ENCODE measurements at regions of chr5 and their contacts with region 1.

Region 1: GRCh38 chr5:57736716-57737115 is 254.1 kb upstream of the ACTBL2 start:
- DNase-seq: no peak
- H3K4me3 ChIP-seq: no peak overlapping the region
- H3K27ac ChIP-seq: peak overlapping the region; percentile 92
- H3K4me1 ChIP-seq: peaks cover 49% of the 10 kb centered on the region
- H3K27me3 ChIP-seq: no peaks in the 10 kb centered on the region
- CTCF ChIP-seq: no peak

Region 2: DNA sequence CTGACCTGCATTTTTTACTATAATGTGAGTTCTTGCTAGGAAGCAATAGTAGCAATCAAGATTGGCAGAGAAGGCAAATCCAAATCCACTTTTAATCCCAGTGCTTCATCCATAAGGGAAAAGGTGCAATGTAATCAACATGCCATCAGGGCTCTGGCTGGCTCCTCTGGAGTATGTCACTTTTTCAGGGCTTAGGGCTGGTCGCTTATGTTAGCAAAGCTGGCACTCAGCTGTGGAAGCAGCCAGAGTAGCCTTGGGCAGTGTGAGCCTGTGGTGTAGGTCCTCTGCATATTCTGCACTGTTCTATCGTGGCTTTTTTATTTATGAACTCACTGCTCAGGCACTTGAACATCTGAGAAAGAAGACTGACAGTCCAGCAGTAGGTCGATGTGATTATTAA is 270.2 kb before region 1 on chr5:
- CTCF ChIA-PET with region 1: no interaction called
- POLR2A ChIA-PET with region 1: no interaction called
- intact Hi-C with region 1: no loop called
- DNase-seq: no peak
- H3K4me3 ChIP-seq: no peak overlapping the region
- H3K27ac ChIP-seq: no peak overlapping the region
- H3K4me1 ChIP-seq: peaks cover 13% of the 10 kb centered on the region; the same call in 1 of the 2 replicates
- H3K27me3 ChIP-seq: no peaks in the 10 kb centered on the region
- CTCF ChIP-seq: no peak

Region 3: DNA sequence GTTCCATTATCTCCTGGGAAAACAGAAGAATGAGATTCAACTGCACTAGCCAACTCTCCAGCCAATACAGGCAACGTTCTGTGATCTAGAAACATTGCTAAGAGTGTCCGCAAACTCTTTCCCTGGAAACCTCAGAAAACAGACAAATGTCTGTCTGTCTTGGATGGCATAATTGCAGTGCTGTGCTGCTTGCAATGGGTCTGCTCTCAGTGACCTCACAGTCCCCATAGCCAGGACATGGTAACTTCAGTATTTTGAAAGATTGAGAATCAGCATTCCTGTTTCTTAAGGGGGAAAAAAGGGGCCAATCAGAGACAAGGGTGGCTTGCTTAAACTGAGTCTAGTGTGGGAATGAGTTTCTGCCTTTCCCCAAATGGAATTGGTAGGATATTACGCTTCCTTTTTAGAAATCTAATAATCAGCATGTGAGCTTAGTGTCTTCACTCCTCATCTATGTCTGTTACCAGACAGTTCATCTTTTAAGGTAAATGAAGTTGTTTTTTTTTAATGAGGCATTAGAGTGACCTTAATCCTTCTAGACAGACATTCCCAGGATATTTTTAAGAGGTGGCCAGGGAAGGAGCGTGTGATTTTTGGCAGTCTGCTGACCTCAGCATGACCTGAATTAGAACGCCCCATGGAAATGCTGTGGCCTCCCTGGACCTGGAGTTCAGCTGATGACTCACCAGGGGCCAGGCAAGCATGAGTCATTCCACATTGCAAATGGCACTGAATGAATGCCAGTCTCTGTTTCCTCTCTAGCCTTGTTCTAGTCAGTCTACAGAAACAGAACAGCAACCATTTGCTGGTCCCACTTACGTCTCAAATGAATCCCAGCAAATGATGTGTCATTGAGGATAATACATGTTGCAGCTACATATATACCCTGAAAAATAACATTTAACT is 43.9 kb before region 1 on chr5:
- CTCF ChIA-PET with region 1: no interaction called
- POLR2A ChIA-PET with region 1: no interaction called
- intact Hi-C with region 1: loop called (anchors 1 kb)
- DNase-seq: peak; percentile 83 to 86
- H3K4me3 ChIP-seq: no peak overlapping the region; the same call in 1 of the 2 replicates
- H3K27ac ChIP-seq: peak overlapping the region; percentile 91
- H3K4me1 ChIP-seq: peaks cover 25% of the 10 kb centered on the region
- H3K27me3 ChIP-seq: no peaks in the 10 kb centered on the region
- CTCF ChIP-seq: no peak

Region 4: GRCh38 chr5:57772512-57772911 is 35.8 kb after region 1 on chr5:
- CTCF ChIA-PET with region 1: no interaction called
- POLR2A ChIA-PET with region 1: no interaction called
- intact Hi-C with region 1: no loop called
- DNase-seq: no peak
- H3K4me3 ChIP-seq: no peak overlapping the region
- H3K27ac ChIP-seq: no peak overlapping the region
- H3K4me1 ChIP-seq: no peaks in the 10 kb centered on the region
- H3K27me3 ChIP-seq: no peaks in the 10 kb centered on the region
- CTCF ChIP-seq: no peak

Measured in PC-9 (cell line).